Left ventricle myocardium superior (tissue), 1 donor: ENCODE measurements at regions of chr17 and their contacts with region 1.

Region 1: DNA sequence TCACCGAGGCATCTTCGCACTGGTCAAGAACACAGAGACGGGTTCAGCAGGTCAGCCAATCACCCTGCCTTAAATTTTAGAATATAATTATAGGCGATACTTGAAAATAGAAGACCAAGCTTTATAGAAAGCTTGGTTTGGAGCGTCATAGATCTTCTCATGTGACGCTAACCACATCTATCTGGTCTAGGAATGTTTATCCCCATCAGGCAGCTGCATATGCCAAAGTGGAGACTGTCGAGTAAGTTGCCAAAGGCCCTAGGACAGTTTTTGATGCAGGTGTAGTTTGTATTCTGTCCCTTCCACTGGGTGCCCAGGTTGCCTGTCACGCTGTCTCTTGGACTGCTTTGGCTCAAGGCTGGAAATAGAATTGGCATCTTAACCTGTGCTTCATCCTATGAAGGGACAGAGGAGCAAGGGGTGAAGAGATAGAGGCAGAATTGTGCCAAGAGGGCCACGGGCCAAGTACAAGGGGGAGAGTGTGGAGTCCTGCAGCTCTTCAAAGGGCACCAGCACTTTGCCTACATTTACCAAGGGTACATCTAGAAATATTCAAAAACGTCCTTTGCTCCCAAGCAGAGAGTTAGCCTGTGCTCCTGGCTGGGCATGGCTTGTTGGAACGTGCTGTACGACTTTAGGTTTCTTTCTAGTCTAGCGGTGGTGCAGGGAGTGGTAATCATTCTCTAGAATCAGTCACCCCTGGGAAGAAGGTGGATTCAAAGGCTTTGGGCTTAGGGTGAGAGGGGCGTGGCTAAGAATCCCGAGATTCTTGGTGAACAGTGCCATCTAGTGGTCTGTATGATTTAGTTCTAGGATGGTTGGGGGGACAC is 5.3 kb upstream of the WIPI1 start:
- DNase-seq: peak; percentile 78
- ATAC-seq: peak; percentile 74

Region 2: GRCh38 chr17:68172461-68172954 is 290.1 kb before region 1 on chr17:
- intact Hi-C with region 1: loop called (anchors 5 kb)
- DNase-seq: peak; percentile 74
- ATAC-seq: peak; percentile 85

Region 3: DNA sequence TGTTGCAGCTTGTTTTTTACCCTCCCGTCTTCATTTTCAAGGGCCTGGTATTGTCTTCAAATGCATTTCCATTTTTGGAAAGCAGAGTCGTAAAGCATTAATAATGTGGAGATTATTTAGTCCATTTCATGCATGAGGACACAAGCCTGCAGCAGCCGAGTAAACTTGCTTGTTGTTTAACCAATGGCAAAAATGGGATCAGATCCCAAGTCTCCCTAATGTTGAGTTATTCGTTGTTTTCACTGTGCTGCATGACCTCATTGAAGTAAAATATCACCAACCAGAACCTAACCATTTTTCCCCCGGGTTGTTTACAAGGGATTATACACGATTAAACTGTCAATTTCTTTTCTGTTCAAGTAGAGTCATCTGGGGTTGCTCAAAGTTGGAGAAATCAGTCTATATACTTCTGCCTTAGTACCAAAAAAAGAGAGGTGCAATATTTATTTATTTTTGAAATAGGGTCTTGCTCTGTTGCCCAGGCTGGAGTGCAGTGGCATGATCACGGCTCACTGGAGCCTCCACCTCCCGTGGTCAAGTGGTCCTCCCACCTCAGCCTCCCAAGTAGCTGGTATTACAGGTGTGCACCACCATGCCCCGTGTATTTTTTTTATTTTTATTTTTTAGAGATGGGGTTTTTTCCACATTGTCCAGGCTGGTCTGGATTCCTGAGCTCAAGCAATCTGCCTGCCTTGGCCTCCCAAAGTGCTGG is 202.4 kb before region 1 on chr17:
- intact Hi-C with region 1: loop called (anchors 2 kb)
- DNase-seq: no peak
- ATAC-seq: no peak

Region 4: GRCh38 chr17:68512247-68512982 is 49.8 kb after region 1 on chr17 and contains the start of gene PRKAR1A:
- intact Hi-C with region 1: loop called (anchors 10 kb)
- DNase-seq: peak; percentile 95
- ATAC-seq: peak; percentile 92
- total RNA-seq, gene PRKAR1A: 599 TPM

Region 5: GRCh38 chr17:68527323-68527722 is 64.7 kb after region 1 on chr17:
- intact Hi-C with region 1: no loop called
- DNase-seq: no peak
- ATAC-seq: no peak